Left cardiac atrium (tissue), 4 donors: ENCODE measurements at regions of chr19 and their contacts with region 1.

Region 1: DNA sequence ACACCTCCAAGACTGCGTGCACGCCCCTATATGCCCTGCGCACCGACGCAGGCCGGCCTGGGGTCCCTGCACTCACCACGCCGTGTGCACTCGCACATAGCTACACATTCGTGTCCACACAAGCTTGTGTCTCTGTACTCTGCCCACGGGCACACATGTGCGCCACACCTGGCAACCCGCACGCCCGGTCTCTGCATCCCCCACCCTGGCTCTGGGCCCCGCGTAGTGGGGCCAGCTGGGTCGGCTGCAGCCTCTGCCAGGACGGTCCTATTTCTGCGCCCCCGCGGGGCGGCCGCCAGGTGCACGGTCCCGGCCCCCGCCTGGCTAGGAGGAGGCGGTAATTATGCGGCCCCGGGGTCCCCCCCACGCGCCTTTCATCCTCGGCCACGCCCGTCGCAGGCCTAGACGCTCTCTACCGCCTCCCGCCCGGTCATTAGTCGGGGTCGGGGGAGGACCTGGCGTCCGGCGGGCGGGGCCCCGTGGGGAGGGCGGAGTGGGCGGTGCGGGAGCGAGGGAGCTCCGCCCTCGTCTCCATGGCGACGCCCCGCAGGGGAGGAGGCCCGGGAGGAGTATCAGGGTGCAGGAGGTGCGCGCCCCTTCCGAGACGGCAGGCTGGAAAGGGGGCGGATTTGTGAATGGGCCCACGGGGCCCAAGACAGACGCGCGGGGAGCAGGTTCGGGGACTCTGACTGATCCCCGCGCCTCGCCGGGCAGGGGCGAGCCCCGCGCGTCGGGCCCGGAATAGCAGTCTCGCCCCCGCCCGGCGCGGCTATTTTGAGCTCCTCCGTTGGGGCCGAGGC is 2.8 kb upstream of the CIRBP start:
- DNase-seq: peak; percentile 92
- ATAC-seq: peak; percentile 56 to 65

Region 2: GRCh38 chr19:1241417-1242095 is 24.8 kb before region 1 on chr19 and contains the start of gene ATP5F1D:
- intact Hi-C with region 1: loop called (anchors 1 to 2 kb)
- DNase-seq: peak; percentile 96
- ATAC-seq: peak; percentile 64
- total RNA-seq, gene ATP5F1D: 540 to 639 TPM

Region 3: DNA sequence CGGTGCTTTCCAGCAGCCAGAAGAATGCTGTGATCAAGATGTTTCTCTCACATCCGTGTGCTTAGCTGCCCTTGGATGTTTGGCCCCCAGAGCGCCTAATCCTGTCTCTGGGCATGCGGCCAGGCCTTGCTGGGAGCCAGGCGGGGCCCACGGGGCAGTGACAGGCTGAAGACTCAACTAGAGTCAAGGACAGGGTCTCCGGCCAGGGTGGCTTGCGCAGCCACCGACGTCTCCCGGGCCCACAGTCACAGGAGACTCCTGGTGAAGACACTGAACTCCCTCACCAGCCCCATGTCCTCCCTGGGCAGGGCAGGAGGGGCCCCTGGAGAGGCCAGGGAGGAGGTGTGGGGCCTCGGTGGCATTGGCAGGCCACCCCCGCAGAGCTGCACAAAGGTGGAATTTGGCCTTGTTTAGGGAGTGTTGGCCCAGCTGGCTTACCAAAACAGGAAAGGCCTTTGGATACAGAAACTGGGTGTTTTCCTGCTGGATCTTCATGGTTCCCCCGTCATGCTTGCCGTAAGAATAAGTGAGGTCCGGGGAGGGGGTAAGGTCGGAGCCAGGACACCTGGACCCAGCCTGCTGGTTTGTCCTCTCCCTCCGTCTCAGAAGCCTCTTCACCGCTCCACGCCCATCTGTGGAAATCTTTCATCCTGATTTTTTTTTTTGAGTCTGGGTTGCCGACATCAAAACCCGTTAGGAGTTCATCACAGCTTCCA is 107.4 kb after region 1 on chr19:
- intact Hi-C with region 1: no loop called
- DNase-seq: peak; percentile 78
- ATAC-seq: peak; percentile 77 to 82